CD8-positive, alpha-beta T cell (primary cell): ENCODE measurements at regions of chr12 and their contacts with region 1.

Region 1: GRCh38 chr12:54419088-54419892 is at the start of gene ITGA5:
- DNase-seq: peak in 5 of 9 experiments; percentile 27 to 76 (median 63)
- ATAC-seq: peak; percentile 33
- H3K4me3 ChIP-seq: peak within 1 kb of the TSS; percentile 92
- H3K4me3 Mint-ChIP-seq: peak within 1 kb of the TSS; percentile 94
- H3K27ac ChIP-seq: peak within 1 kb of the TSS; percentile 71 to 84
- H3K27ac Mint-ChIP-seq: peak within 1 kb of the TSS; percentile 97
- H3K4me1 ChIP-seq: peaks cover 52% of the 10 kb centered on the region
- H3K4me1 Mint-ChIP-seq: peaks cover 53% of the 10 kb centered on the region
- H3K27me3 ChIP-seq: no peaks in the 10 kb centered on the region
- H3K27me3 Mint-ChIP-seq: no peaks in the 10 kb centered on the region
- CTCF ChIP-seq: no peak
- total RNA-seq, gene ITGA5: 115 to 125 TPM

Region 2: DNA sequence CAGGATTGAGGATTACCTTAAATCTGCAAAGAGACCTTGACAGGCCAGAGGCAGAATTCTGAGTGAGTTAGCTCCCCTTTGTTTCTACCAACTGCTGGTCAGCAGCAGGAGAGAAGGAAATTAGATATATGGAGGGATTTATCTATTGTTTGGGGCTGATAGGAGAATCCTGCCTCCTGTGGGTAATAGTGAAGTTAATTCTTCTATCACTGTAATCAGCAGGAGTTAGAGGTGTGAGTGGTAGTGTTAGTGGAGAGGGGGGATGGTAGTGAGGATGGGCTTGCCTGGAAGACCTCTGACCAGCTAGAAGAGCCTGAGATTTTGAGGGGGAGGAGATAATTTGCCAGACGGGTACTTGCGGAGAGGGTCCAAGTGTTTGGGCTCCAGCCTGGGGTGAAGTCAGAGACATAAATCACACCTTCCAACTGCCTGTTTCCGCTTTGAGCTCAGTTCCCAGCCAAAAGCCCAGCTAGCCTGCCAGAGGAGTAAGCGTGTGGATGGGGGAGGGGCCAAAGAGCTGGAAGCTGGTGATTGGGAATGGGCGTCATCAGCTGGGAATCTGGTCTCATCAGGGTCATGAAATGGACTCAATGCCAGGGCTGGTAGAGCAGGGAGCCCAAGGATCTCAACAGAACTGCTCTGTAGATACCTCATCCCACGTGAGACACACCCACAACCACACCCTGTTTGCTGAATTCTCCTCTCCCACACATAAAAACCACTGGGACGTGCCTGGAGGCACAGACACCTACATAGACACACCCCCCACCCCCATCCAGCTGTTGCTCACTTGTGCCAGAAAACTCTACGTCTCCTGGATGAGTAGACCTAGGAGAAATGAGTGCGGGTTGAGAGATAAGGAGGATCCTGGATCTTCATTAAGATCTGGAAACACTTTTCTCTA is 12.9 kb after region 1 on chr12:
- CTCF ChIA-PET with region 1: interaction called, 155 read pairs
- POLR2A ChIA-PET with region 1: interaction called, 5 read pairs
- intact Hi-C with region 1: no loop called
- DNase-seq: peak in 1 of 9 experiments; percentile 21
- ATAC-seq: no peak
- H3K4me3 ChIP-seq: no peak overlapping the region
- H3K4me3 Mint-ChIP-seq: no peak overlapping the region
- H3K27ac ChIP-seq: no peak overlapping the region
- H3K27ac Mint-ChIP-seq: no peak overlapping the region
- H3K4me1 ChIP-seq: peaks cover 14% of the 10 kb centered on the region
- H3K4me1 Mint-ChIP-seq: peaks cover 44% of the 10 kb centered on the region
- H3K27me3 ChIP-seq: no peaks in the 10 kb centered on the region
- H3K27me3 Mint-ChIP-seq: no peaks in the 10 kb centered on the region
- CTCF ChIP-seq: no peak